ENCODE measurements at regions of chr10 and their contacts with region 1.

Region 1: GRCh38 chr10:73997787-73998622 is at the start of gene VCL:
- DNase-seq: peak; percentile 95
- H3K4me3 Mint-ChIP-seq: peak within 1 kb of the TSS; percentile 98
- H3K27ac Mint-ChIP-seq: peak within 1 kb of the TSS; percentile 100
- H3K4me1 Mint-ChIP-seq: peaks cover 59% of the 10 kb centered on the region
- H3K27me3 Mint-ChIP-seq: no peaks in the 10 kb centered on the region
- total RNA-seq, gene VCL: 24.4 and 26.0 TPM in 2 replicates

Region 2: GRCh38 chr10:73983096-73984047 is 14.6 kb before region 1 on chr10:
- intact Hi-C with region 1: no loop called
- DNase-seq: no peak
- H3K4me3 Mint-ChIP-seq: no peak overlapping the region
- H3K27ac Mint-ChIP-seq: no peak overlapping the region
- H3K4me1 Mint-ChIP-seq: no peaks in the 10 kb centered on the region
- H3K27me3 Mint-ChIP-seq: peaks cover 22% of the 10 kb centered on the region

Region 3: DNA sequence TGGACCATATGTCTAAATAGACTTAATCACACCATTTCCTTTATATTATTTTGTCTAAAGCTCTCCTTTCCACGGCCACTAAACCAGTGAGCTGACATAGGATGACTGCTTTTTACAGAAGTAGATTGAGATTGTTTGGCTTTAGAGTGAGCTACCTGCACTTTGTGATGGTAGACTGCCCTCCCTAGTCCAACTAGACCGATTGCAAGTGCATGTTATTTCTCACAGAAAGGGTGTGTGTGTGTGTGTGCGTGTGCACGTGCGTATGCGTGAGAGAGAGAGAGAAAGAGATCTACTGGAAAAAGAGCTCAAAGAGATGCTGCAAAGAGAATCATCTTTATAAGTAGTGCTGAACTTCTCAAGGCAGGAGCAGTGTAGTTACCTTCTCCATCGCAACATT is 60.7 kb after region 1 on chr10:
- intact Hi-C with region 1: loop called (anchors 1 kb)
- DNase-seq: no peak
- H3K4me3 Mint-ChIP-seq: no peak overlapping the region
- H3K27ac Mint-ChIP-seq: peak overlapping the region; percentile 18
- H3K4me1 Mint-ChIP-seq: peaks cover 45% of the 10 kb centered on the region
- H3K27me3 Mint-ChIP-seq: peaks cover 4% of the 10 kb centered on the region

Region 4: GRCh38 chr10:74081192-74081803 is 83.3 kb after region 1 on chr10:
- intact Hi-C with region 1: loop called (anchors 1 kb)
- DNase-seq: peak; percentile 12
- H3K4me3 Mint-ChIP-seq: no peak overlapping the region
- H3K27ac Mint-ChIP-seq: peak overlapping the region; percentile 0
- H3K4me1 Mint-ChIP-seq: peaks cover 48% of the 10 kb centered on the region
- H3K27me3 Mint-ChIP-seq: no peaks in the 10 kb centered on the region

Measured in activated T-helper 1 cell treated with anti-CD3 and anti-CD28 coated beads, Interleukin-12 subunit alpha, Interleukin-12 subunit beta, Interleukin-2, Interleukin-4 antibody, amounts not matched to agents 30 ng/mL and 10 ng/mL and 1 ng/mL, durations not matched to agents 14 hours and 24 hours and 36 hours (primary cell).